ENCODE measurements at regions of chr2 and their contacts with region 1.

Region 1: DNA sequence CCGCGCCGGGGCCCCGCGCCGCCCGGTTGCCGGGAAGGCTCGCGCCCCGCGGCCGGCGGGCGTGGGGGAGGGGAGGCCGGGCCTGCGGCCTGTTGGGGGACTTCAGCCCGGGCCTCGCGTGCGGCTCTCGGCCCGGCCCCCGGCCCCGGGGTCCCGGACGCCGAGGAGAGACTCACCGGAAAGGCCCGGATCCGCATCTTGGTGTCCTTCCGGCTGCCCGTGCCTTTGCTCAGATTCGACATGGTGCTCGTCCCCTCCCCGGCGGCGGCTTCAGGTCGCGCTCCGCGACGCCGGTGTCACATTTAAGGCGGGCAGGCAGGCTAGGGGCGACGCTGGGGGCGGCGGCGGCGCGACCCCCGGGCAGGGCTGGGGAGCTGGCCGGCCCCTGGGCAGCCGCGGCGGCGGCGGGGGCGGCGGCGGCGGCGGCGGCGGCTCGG is 377 bp downstream of the CUL3 start:
- DNase-seq: no peak
- ATAC-seq: peak; percentile 21
- H3K4me3 ChIP-seq: peak overlapping the region; percentile 79 to 92
- H3K27ac ChIP-seq: peak overlapping the region; percentile 92
- H3K4me1 ChIP-seq: peaks cover 11 to 27% of the 10 kb centered on the region in 2 experiments; a peak in 3 of 4 replicates
- H3K27me3 ChIP-seq: no peaks in the 10 kb centered on the region
- CTCF ChIP-seq: no peak
- POLR2A ChIP-seq: no peak
- RAD21 ChIP-seq: no peak

Region 2: DNA sequence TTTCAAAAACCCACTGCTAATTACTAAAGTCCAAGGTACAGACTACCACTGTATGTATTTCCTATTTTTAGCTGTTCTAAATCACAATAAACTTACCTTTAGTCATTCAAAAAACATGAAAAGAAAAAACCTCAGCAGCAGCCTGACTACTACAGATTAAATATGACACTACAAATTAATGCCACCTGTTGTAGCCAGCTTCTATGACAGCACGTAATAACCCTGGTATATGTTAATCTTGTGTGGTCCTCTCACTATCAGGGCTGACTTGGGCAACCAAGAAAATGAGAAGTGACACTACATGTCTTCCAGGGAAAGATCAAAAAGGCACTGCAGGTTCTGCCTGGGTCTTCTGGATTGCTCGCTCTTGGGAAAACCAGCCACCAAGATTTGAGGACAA is 92.3 kb before region 1 on chr2:
- CTCF ChIA-PET with region 1: no interaction called
- POLR2A ChIA-PET with region 1: interaction called, 4 read pairs
- RAD21 ChIA-PET with region 1: no interaction called
- intact Hi-C with region 1: loop called (anchors 5 kb)
- DNase-seq: no peak
- ATAC-seq: no peak
- H3K4me3 ChIP-seq: no peak overlapping the region
- H3K27ac ChIP-seq: no peak overlapping the region
- H3K4me1 ChIP-seq: peaks cover under 1 to 3% of the 10 kb centered on the region in 2 experiments; a peak in 2 of 4 replicates
- H3K27me3 ChIP-seq: no peaks in the 10 kb centered on the region
- CTCF ChIP-seq: no peak
- POLR2A ChIP-seq: no peak
- RAD21 ChIP-seq: no peak

Region 3: DNA sequence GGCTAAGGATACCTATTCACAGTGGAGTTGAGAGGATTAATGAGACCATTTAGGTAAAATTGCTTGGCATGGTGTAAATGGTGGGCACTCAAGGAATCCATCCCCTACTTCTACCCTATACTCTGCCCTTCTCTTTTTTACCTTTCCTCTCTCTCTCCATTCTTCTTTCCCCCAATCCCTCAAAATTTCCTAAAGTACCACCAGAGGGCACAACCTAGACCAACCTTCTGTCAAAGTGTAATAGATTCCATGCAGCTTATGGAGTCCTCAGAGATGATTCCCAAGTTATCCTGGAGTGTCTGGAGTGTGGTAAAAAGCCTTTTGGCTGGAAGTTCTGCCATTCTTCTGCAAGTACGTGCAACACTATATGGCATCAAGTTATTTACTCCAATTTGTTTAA is 164.3 kb after region 1 on chr2:
- CTCF ChIA-PET with region 1: no interaction called
- POLR2A ChIA-PET with region 1: no interaction called
- RAD21 ChIA-PET with region 1: no interaction called
- intact Hi-C with region 1: no loop called
- DNase-seq: no peak
- ATAC-seq: peak; percentile 70
- H3K4me3 ChIP-seq: no peak overlapping the region
- H3K27ac ChIP-seq: no peak overlapping the region
- H3K4me1 ChIP-seq: no peaks in the 10 kb centered on the region
- H3K27me3 ChIP-seq: no peaks in the 10 kb centered on the region
- CTCF ChIP-seq: peak; percentile 29 to 50 (median 47); a peak in 5 of 6 replicates
- POLR2A ChIP-seq: no peak
- RAD21 ChIP-seq: peak; percentile 34; the same call in 1 of the 2 replicates

Measured in HCT116 (cell line).